SK-N-SH (cell line): ENCODE measurements at regions of chr17 and their contacts with region 1.

Region 1: GRCh38 chr17:13002766-13003451 is 14.9 kb downstream of the ELAC2 start:
- DNase-seq: peak; percentile 78
- H3K4me3 ChIP-seq: no peak overlapping the region
- H3K27ac ChIP-seq: no peak overlapping the region
- H3K4me1 ChIP-seq: no peaks in the 10 kb centered on the region
- H3K27me3 ChIP-seq: no peaks in the 10 kb centered on the region
- CTCF ChIP-seq: peak; percentile 92
- EP300 ChIP-seq: no peak
- RAD21 ChIP-seq: peak; percentile 78

Region 2: GRCh38 chr17:12545877-12546513 is 456.9 kb before region 1 on chr17:
- CTCF ChIA-PET with region 1: interaction called, 12 read pairs
- POLR2A ChIA-PET with region 1: no interaction called
- DNase-seq: peak; percentile 45
- H3K4me3 ChIP-seq: peak overlapping the region in 1 of 2 experiments; percentile 26; a peak in 1 of 4 replicates
- H3K27ac ChIP-seq: no peak overlapping the region
- H3K4me1 ChIP-seq: no peaks in the 10 kb centered on the region
- H3K27me3 ChIP-seq: peaks cover 15% of the 10 kb centered on the region; the same call in 1 of the 2 replicates
- CTCF ChIP-seq: peak; percentile 78
- EP300 ChIP-seq: no peak
- RAD21 ChIP-seq: peak; percentile 41

Region 3: DNA sequence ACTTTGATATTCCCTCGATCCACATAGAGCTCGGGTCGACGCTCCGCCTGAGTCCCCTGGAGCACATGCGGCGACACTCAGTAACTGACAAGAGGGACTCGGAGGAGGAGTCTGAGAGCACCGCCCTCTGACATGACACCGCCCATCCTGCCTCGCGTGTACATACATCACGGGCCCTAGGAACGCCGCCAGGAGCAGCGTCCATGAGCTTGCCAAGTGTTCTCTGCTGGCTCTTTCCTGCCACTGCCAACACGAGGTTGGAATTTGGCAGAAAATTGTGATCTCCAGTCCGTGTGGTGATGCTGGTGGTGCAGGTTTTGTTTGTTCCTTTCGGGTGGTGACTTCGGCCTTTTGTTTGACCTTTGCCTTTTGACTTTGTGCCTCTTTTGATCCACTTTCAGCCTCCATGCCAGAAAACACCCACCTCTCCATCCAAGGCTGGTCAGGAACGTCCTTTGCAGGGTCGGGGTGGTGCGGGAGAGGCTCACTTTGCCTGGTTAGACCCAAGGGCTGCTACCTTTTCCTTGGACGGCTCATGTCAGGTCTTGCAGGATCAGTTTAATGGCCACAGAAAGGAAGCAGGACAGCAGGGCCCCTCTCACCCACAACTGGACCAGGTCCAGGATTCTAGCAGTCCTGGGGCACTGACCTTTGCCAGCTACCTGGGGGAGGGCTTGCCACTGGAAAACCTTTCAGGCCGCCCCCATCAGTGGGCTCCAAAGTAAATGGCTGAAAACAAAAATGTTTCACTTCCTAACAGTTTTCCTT is 12.7 kb before region 1 on chr17:
- CTCF ChIA-PET with region 1: interaction called, 37 read pairs
- POLR2A ChIA-PET with region 1: interaction called, 6 read pairs
- DNase-seq: no peak
- H3K4me3 ChIP-seq: no peak overlapping the region
- H3K27ac ChIP-seq: no peak overlapping the region
- H3K4me1 ChIP-seq: peaks cover 0 to 10% of the 10 kb centered on the region in 2 experiments; a peak in 1 of 4 replicates
- H3K27me3 ChIP-seq: peaks cover 3% of the 10 kb centered on the region; the same call in 1 of the 2 replicates
- CTCF ChIP-seq: no peak
- EP300 ChIP-seq: no peak
- RAD21 ChIP-seq: no peak

Region 4: DNA sequence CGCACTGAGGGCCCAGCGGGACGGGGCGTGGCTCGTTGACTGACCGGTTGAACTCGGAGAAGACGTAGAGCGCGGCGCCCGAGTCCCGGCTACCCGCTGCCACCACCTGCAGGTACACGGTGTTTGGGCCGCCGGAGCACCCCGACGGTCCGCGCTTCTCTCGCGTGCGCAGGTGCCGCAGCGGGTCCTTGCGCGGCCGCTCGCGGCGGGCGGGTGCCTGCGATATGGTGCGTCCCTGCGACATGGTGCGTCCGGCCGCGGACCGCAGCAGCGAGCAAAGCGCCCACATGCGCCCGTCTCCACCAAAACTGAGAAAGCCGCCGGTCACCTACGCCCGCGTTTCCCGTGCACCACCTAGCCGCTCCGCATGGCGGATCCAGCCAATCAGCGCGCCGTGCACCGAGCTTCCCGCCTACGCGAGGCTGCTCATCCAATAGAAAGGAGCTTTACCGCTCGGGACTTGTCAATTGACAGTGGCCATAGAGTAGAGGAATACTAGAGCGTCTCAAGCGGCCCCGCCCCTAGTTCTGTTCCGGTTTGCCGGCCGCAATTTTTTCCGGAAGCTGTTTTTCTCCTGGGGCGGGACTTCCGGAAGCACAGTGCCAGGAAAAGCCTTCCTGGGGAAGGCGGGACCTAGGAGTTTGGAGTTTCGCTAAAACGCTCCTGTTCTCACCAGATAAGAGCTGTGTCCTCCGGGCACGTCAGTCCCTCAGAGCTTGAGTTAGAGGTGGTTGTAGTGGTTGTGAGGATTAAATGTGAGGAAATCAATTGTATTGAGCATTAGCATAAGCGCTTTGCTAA is 14.9 kb after region 1 on chr17 and contains the start of gene ELAC2:
- CTCF ChIA-PET with region 1: interaction called, 10 read pairs
- POLR2A ChIA-PET with region 1: interaction called, 3 read pairs
- DNase-seq: peak; percentile 97
- H3K4me3 ChIP-seq: peak within 1 kb of the TSS; percentile 71 to 93
- H3K27ac ChIP-seq: peak within 1 kb of the TSS; percentile 66 to 82
- H3K4me1 ChIP-seq: peaks cover 0 to 5% of the 10 kb centered on the region in 2 experiments; a peak in 2 of 4 replicates
- H3K27me3 ChIP-seq: no peaks in the 10 kb centered on the region; the same call in 1 of the 2 replicates
- CTCF ChIP-seq: no peak
- EP300 ChIP-seq: no peak; a peak in 1 of 4 replicates
- RAD21 ChIP-seq: no peak
- polyA plus RNA-seq, gene ELAC2: 77.6 and 95.8 TPM in 2 replicates

Region 5: DNA sequence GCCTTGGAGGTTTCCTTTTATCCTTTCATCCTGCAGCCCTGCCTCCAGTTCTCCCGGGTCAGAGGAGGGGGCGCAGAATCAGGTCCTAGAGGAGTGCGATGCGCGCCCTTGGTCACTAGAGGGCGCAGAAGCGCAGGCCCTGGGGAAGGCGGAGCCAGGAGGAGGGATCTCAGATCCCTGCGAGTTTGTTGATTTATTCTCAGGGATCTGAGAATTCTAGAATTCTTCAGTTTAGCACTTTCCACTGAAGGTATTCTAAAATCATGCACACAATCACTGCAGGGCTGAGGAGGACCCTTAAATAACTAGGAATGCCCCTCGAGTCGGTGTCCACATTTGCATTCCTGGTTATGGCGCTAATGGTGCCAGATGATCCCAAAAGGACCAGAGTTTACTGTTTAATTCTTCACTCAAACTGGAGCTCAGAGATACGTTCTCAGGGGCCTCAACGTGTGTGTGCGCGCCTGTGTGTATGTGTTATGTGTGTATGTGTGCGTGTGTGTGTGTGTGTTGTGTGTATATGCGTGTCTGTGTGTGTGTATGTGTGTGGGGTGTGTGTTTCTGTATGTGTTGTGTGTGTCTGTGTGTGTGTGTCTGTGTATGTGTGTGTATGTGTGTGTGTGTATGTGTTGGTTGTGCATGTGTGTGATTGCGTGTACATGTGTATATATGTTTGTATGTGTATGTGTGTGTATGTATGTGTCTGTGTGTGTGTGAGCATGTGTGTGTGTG is 21.8 kb after region 1 on chr17:
- CTCF ChIA-PET with region 1: interaction called, 15 read pairs
- POLR2A ChIA-PET with region 1: no interaction called
- DNase-seq: peak; percentile 83
- H3K4me3 ChIP-seq: peak overlapping the region; percentile 39 to 61
- H3K27ac ChIP-seq: no peak overlapping the region
- H3K4me1 ChIP-seq: peaks cover 0 to 6% of the 10 kb centered on the region in 2 experiments; a peak in 1 of 4 replicates
- H3K27me3 ChIP-seq: peaks cover 4% of the 10 kb centered on the region; the same call in 1 of the 2 replicates
- CTCF ChIP-seq: peak; percentile 98
- EP300 ChIP-seq: no peak
- RAD21 ChIP-seq: peak; percentile 52